Caco-2 (cell line): ENCODE measurements at regions of chr2 and their contacts with region 1.

Region 1: DNA sequence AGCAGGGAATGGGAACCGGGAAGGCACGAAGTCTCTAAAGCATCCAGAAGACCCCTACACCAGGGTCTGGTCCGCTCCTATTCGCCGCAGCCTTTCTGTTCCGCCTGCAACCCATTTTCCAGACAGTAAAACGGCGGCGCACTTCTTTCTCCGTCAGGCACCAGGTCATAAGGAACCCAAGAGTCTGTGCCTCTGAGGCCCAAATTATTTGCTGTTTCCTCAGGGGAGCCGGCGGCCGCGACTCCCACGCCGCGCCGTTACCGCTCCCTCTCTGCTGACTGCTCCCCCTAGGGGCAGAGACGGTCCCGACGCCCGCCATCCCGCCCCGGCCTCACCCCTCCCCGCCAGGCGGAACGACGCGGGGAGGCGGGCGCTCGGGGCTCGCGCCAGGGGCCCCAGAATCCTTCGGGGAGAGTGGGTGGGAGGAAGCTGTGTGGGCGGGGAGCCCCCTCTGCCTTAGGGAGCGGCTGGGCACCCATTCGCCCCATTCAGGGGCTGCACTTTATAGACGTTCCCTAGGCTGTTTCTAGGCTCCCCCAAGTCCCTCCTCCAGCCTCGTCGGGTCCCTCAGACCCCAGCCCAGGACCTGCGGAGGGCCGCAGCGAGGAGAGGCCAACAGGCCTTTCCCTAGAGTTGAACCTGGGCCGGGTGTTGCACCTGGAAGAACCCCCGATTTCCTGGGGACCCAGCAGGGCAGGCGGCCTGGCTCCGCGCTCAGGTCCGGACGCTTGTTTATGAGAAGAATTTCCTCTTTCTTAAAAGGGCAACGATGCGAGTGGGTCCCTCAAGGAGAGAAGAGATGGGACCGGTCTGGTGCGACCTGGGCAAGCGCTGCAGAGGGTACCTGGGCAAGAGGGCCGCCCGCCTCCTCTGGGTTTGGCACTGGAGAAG is 3.6 kb upstream of the CTDSP1 start:
- DNase-seq: peak; percentile 97
- H3K4me3 ChIP-seq: peak overlapping the region; percentile 77
- H3K4me3 Mint-ChIP-seq: peak overlapping the region; percentile 98
- H3K27ac Mint-ChIP-seq: peak overlapping the region; percentile 98
- H3K4me1 ChIP-seq: peaks cover 9% of the 10 kb centered on the region
- H3K4me1 Mint-ChIP-seq: peaks cover 22% of the 10 kb centered on the region
- H3K27me3 ChIP-seq: no peaks in the 10 kb centered on the region
- H3K27me3 Mint-ChIP-seq: no peaks in the 10 kb centered on the region
- CTCF ChIP-seq: peak; percentile 86 to 92

Region 2: GRCh38 chr2:217489145-217489960 is 906.7 kb before region 1 on chr2:
- CTCF ChIA-PET with region 1: no interaction called
- POLR2A ChIA-PET with region 1: no interaction called
- intact Hi-C with region 1: no loop called
- DNase-seq: no peak
- H3K4me3 ChIP-seq: no peak overlapping the region
- H3K4me3 Mint-ChIP-seq: no peak overlapping the region
- H3K27ac Mint-ChIP-seq: no peak overlapping the region
- H3K4me1 ChIP-seq: no peaks in the 10 kb centered on the region
- H3K4me1 Mint-ChIP-seq: no peaks in the 10 kb centered on the region
- H3K27me3 ChIP-seq: no peaks in the 10 kb centered on the region
- H3K27me3 Mint-ChIP-seq: peaks cover 16% of the 10 kb centered on the region
- CTCF ChIP-seq: no peak

Region 3: GRCh38 chr2:218269899-218270720 is 125.9 kb before region 1 on chr2 and contains the starts of genes AAMP and PNKD:
- CTCF ChIA-PET with region 1: interaction called, 20 read pairs
- POLR2A ChIA-PET with region 1: interaction called, 4 read pairs
- intact Hi-C with region 1: loop called (anchors 1 kb)
- DNase-seq: peak; percentile 100
- H3K4me3 ChIP-seq: peak within 1 kb of the TSS; percentile 65
- H3K4me3 Mint-ChIP-seq: peak within 1 kb of the TSS; percentile 91
- H3K27ac Mint-ChIP-seq: peak within 1 kb of the TSS; percentile 93
- H3K4me1 ChIP-seq: peaks cover 7% of the 10 kb centered on the region
- H3K4me1 Mint-ChIP-seq: peaks cover 13% of the 10 kb centered on the region
- H3K27me3 ChIP-seq: no peaks in the 10 kb centered on the region
- H3K27me3 Mint-ChIP-seq: no peaks in the 10 kb centered on the region
- CTCF ChIP-seq: peak in 1 of 2 experiments; percentile 23
- total RNA-seq, gene AAMP: 118 and 125 TPM in 2 replicates
- total RNA-seq, gene PNKD: 39.2 and 42.9 TPM in 2 replicates

Region 4: DNA sequence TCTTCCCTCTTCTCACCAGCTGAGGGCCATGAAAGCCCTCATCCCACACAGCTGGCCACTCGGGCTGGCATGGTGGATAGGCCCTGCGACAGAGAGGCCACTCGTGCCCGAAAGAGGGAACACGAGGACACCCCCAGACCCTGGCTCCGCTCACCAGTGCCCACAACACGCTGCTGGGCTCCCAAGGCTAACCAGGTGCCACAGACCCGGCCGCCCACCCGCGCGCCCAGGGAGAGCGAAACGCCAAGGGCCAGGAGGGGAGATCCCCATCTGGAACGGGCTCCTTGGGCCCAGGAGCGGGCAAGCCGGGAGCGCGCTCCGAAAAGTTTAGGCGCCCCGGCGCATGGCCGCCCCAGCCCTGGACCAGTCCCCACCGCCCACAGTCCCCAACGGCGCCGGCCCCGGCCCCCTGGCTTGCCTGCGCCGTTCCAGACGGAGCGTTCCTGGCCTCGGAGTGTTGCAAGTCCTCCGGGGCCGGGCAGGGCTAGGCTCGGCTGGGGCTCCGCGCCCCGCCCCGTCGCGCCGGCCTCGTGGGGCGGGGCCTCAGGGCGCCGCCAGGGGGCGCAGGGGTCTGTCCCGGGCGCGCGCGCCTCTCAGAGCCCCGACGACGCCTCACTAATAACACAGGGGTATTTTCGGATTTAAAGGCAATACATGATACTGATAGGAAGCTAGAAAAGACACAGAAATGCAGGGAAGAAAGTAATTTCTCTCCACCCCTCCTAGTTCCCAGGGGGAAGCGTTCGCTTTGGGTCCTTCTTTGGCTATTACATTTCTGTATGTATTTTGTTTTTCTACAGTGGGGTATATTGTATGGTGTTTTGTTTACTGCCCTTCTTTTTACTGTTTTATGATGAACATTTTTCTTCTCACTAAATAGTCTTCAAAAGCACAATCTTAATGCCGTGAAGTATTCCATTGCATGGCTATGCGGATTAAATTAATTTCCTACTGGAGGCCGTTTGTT is 103.7 kb before region 1 on chr2 and contains the start of gene TMBIM1:
- CTCF ChIA-PET with region 1: interaction called, 28 read pairs
- POLR2A ChIA-PET with region 1: interaction called, 37 read pairs
- intact Hi-C with region 1: loop called (anchors 1 kb)
- DNase-seq: peak; percentile 75 to 94
- H3K4me3 ChIP-seq: peak within 1 kb of the TSS; percentile 97
- H3K4me3 Mint-ChIP-seq: peak within 1 kb of the TSS; percentile 86
- H3K27ac Mint-ChIP-seq: peak within 1 kb of the TSS; percentile 100
- H3K4me1 ChIP-seq: peaks cover 83% of the 10 kb centered on the region
- H3K4me1 Mint-ChIP-seq: peaks cover 56% of the 10 kb centered on the region
- H3K27me3 ChIP-seq: no peaks in the 10 kb centered on the region
- H3K27me3 Mint-ChIP-seq: no peaks in the 10 kb centered on the region
- CTCF ChIP-seq: peak; percentile 49 to 95
- total RNA-seq, gene TMBIM1: 168 and 175 TPM in 2 replicates

Region 5: GRCh38 chr2:218312267-218312756 is 83.7 kb before region 1 on chr2:
- CTCF ChIA-PET with region 1: interaction called, 5 read pairs
- POLR2A ChIA-PET with region 1: interaction called, 10 read pairs
- intact Hi-C with region 1: loop called (anchors 1 kb)
- DNase-seq: peak; percentile 91 to 96
- H3K4me3 ChIP-seq: no peak overlapping the region
- H3K4me3 Mint-ChIP-seq: peak overlapping the region; percentile 56
- H3K27ac Mint-ChIP-seq: peak overlapping the region; percentile 87
- H3K4me1 ChIP-seq: peaks cover 55% of the 10 kb centered on the region
- H3K4me1 Mint-ChIP-seq: peaks cover 32% of the 10 kb centered on the region
- H3K27me3 ChIP-seq: no peaks in the 10 kb centered on the region
- H3K27me3 Mint-ChIP-seq: no peaks in the 10 kb centered on the region
- CTCF ChIP-seq: no peak

Region 6: DNA sequence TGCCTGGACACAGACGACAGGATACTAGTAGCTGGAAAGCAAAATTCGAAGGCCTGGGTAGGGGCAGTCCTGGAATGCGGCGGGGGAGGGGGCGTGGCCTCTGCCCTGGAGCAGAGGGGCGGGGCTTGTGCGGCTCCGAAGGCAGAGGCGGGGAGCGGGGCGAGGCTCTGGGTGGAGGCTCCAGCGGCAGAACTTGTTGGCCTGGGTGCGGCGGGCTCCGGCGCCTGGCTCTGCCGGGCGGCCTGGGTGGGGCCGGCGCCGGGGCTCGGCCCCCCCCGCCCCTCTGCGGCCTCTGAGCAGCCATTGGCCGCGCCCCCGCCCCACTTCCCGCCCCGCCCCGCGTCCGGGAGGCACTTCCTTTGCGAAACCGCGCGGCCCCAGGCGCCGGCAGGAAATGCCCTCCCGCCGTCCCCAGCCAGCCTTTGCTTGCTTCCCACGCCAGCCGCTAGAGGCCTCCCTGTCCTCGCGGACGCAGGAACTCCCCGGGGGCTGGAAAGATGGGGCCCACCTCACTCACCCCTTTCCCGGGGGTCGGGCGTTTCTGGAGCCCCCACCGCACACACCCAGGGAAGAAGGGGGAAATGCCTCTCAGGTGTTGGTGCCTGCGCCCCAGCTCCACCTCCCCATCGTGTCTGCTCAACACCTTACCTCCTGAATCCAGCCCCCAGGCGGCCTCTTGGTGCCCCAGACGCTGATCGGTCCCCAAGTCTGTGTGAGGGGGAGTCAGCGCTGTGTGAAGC is 10.3 kb after region 1 on chr2:
- CTCF ChIA-PET with region 1: interaction called, 5 read pairs
- POLR2A ChIA-PET with region 1: interaction called, 4 read pairs
- intact Hi-C with region 1: loop called (anchors 1 kb)
- DNase-seq: peak; percentile 97 to 98
- H3K4me3 ChIP-seq: peak overlapping the region; percentile 39
- H3K4me3 Mint-ChIP-seq: peak overlapping the region; percentile 89
- H3K27ac Mint-ChIP-seq: peak overlapping the region; percentile 99
- H3K4me1 ChIP-seq: peaks cover 29% of the 10 kb centered on the region
- H3K4me1 Mint-ChIP-seq: peaks cover 38% of the 10 kb centered on the region
- H3K27me3 ChIP-seq: no peaks in the 10 kb centered on the region
- H3K27me3 Mint-ChIP-seq: no peaks in the 10 kb centered on the region
- CTCF ChIP-seq: peak; percentile 83 to 96